ENCODE measurements at regions of chr6 and their contacts with region 1.

Region 1: GRCh38 chr6:14270925-14271791 is 153.6 kb downstream of the CD83 start:
- DNase-seq: peak; percentile 97
- H3K4me3 Mint-ChIP-seq: no peak overlapping the region
- H3K27ac Mint-ChIP-seq: peak overlapping the region; percentile 64
- H3K4me1 Mint-ChIP-seq: peaks cover 37% of the 10 kb centered on the region
- H3K27me3 Mint-ChIP-seq: no peaks in the 10 kb centered on the region
- CTCF ChIP-seq: no peak

Region 2: DNA sequence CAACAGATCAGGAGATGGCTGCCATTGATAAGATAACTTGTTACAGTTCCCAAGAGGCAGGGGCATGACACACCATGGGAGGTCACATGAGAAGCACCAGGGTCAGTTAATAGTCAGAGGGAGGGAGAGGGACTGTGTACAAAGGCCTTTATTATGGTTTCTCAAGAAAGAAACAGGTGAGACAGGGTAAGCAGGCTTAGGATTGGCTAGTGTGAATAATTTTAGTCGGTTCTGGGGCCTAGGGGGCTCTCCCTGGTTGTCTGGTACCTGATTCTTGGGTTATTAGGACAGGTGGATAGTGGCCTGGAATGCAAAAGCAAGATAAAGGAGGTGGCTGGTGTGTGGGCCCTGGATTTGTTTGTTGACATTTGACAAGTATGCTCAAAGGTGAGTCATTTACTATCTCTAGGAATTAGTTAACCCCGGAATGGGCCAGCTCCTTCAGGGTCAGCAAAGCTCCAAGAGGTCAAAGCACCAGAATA is 407.4 kb before region 1 on chr6:
- CTCF ChIA-PET with region 1: no interaction called
- POLR2A ChIA-PET with region 1: no interaction called
- intact Hi-C with region 1: no loop called
- DNase-seq: no peak
- H3K4me3 Mint-ChIP-seq: no peak overlapping the region
- H3K27ac Mint-ChIP-seq: no peak overlapping the region
- H3K4me1 Mint-ChIP-seq: no peaks in the 10 kb centered on the region
- H3K27me3 Mint-ChIP-seq: peaks cover 12% of the 10 kb centered on the region
- CTCF ChIP-seq: no peak

Region 3: GRCh38 chr6:14734416-14735340 is 463.5 kb after region 1 on chr6:
- CTCF ChIA-PET with region 1: no interaction called
- POLR2A ChIA-PET with region 1: no interaction called
- intact Hi-C with region 1: loop called (anchors 5 kb)
- DNase-seq: peak; percentile 79
- H3K4me3 Mint-ChIP-seq: no peak overlapping the region
- H3K27ac Mint-ChIP-seq: peak overlapping the region; percentile 85
- H3K4me1 Mint-ChIP-seq: peaks cover 45% of the 10 kb centered on the region
- H3K27me3 Mint-ChIP-seq: no peaks in the 10 kb centered on the region
- CTCF ChIP-seq: no peak

Region 4: DNA sequence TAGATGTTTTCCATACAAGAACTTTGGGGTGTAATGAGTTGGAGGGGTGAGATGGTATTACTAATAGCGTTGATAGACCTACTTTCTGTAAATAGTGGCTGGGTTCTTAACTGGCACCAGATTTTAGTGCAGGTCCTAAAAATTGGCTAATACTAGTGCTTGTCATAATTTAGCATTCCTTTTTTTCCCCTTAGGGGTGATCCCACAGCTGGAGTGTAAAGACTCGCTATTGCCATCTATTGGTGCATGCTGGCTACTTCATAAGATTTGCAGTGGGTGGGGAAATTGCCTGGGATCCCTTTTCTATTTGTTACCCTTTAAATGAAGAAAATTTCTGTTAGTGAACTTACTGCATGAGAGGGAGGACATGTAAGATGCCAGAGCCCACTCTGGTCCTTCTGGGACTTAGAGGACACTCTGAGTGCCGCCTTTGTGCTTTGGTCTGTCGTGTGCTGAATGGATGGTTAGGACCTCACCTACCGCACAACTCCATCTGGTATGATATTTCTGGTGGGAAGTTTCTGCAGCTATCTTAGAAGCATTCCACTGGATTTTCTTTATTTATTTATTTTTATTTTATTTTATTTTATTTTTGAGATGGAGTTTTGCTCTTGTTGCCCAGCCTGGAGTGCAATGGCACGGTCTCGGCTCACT is 1170.2 kb after region 1 on chr6:
- CTCF ChIA-PET with region 1: no interaction called
- POLR2A ChIA-PET with region 1: no interaction called
- intact Hi-C with region 1: loop called (anchors 5 kb)
- DNase-seq: peak; percentile 82
- H3K4me3 Mint-ChIP-seq: no peak overlapping the region
- H3K27ac Mint-ChIP-seq: no peak overlapping the region
- H3K4me1 Mint-ChIP-seq: peaks cover 31% of the 10 kb centered on the region
- H3K27me3 Mint-ChIP-seq: no peaks in the 10 kb centered on the region
- CTCF ChIP-seq: peak; percentile 75

Measured in MCF 10A (cell line).